Heart right ventricle (tissue), 16 donors: ENCODE measurements at regions of chr5 and their contacts with region 1.

Region 1: DNA sequence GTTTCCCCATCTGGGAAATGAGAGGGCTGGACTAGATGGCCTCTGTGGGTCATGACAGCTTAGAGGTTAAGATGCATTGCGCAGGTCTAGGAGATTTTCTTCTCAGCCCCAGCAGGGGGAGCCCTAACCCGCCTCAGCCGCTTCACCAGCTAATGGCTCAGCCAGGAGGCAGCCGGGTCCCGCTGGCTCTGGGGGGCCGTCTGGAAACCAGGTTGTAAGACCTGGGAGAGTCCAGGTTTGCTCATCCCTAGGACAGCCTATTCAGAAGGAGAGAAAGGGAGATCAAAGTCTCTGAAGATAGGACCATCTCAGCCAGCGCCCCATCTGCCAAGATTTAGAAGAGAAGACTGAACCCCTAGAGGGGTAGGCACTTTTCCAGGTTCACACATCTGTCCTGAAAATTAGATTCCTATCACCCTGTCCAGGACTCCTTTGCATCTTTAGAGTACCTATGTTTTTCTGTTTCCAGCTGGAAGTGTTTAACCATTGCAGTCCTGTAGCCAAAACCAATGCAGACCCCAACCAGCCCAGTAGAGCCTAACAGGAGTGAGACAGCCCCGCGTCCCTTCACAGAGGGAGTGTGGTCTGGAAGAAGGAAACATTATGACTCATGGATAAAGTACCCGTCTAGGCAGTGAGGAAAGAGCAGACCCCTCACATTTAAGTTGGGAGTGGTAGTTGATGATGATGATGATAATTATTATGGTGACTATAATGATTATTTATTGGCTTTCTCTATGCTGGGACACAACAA is 27.5 kb downstream of the SPARC start:
- DNase-seq: peak; percentile 88
- ATAC-seq: peak; percentile 76 to 91 (median 82)
- H3K4me3 ChIP-seq: no peak overlapping the region
- H3K27ac ChIP-seq: peak overlapping the region in 8 of 10 donors; percentile 3 to 84 (median 32)
- H3K4me1 ChIP-seq: peaks cover 8 to 41% (median 22%) of the 10 kb centered on the region in 9 donors
- H3K27me3 ChIP-seq: no peaks in the 10 kb centered on the region
- CTCF ChIP-seq: peak; percentile 88 to 97 (median 91)

Region 2: DNA sequence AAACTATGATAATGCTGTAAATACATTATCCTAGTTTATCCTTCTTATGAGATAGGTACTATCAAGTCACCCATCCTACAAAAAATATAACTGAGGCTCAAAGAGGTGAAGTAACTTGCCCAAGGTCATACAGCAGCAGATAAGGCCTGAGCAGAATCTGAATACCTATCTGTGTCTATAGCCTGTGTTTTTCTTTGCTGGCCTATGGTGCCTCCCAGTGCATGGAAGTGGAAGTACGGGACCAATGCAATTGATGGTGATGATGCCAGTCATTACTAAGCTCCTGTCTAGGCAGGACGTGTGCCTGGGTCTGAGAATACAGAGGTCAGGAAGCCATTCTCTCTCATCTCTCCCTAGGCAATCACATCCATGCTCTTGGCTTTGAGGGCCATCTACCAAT is 135.8 kb before region 1 on chr5:
- intact Hi-C with region 1: loop called in 5 of 10 experiments (anchors 5 to 10 kb)
- DNase-seq: no peak
- ATAC-seq: peak in 1 of 8 donors; percentile 11
- H3K4me3 ChIP-seq: no peak overlapping the region
- H3K27ac ChIP-seq: no peak overlapping the region
- H3K4me1 ChIP-seq: peaks cover 0 to 4% (median 0%) of the 10 kb centered on the region in 9 donors
- H3K27me3 ChIP-seq: no peaks in the 10 kb centered on the region
- CTCF ChIP-seq: peak in 7 of 9 donors; percentile 17 to 55 (median 28)

Region 3: GRCh38 chr5:151602806-151603205 is 56.4 kb before region 1 on chr5:
- intact Hi-C with region 1: no loop called
- DNase-seq: no peak
- ATAC-seq: no peak
- H3K4me3 ChIP-seq: no peak overlapping the region
- H3K27ac ChIP-seq: no peak overlapping the region
- H3K4me1 ChIP-seq: no peaks in the 10 kb centered on the region
- H3K27me3 ChIP-seq: peaks cover 0 to 16% (median 0%) of the 10 kb centered on the region in 7 donors
- CTCF ChIP-seq: no peak

Region 4: GRCh38 chr5:151699071-151699901 is 40.1 kb after region 1 on chr5:
- intact Hi-C with region 1: loop called in 1 of 10 experiments (anchors 5 kb)
- DNase-seq: peak; percentile 75 to 77
- ATAC-seq: peak; percentile 87 to 91 (median 89)
- H3K4me3 ChIP-seq: peak overlapping the region in 1 of 10 donors; percentile 23
- H3K27ac ChIP-seq: peak overlapping the region; percentile 29 to 89 (median 82)
- H3K4me1 ChIP-seq: peaks cover 0 to 56% (median 26%) of the 10 kb centered on the region in 9 donors
- H3K27me3 ChIP-seq: peaks cover 0 to 6% (median 0%) of the 10 kb centered on the region in 7 donors
- CTCF ChIP-seq: no peak

Region 5: GRCh38 chr5:151740336-151740942 is 81.3 kb after region 1 on chr5:
- intact Hi-C with region 1: loop called (anchors 1 to 5 kb)
- DNase-seq: peak; percentile 48 to 70
- ATAC-seq: peak; percentile 80 to 90 (median 84)
- H3K4me3 ChIP-seq: peak overlapping the region in 4 of 10 donors; percentile 12 to 29 (median 23)
- H3K27ac ChIP-seq: peak overlapping the region in 9 of 10 donors; percentile 38 to 84 (median 64)
- H3K4me1 ChIP-seq: peaks cover 0 to 53% (median 23%) of the 10 kb centered on the region in 9 donors
- H3K27me3 ChIP-seq: no peaks in the 10 kb centered on the region
- CTCF ChIP-seq: peak; percentile 83 to 94 (median 91)

Region 6: DNA sequence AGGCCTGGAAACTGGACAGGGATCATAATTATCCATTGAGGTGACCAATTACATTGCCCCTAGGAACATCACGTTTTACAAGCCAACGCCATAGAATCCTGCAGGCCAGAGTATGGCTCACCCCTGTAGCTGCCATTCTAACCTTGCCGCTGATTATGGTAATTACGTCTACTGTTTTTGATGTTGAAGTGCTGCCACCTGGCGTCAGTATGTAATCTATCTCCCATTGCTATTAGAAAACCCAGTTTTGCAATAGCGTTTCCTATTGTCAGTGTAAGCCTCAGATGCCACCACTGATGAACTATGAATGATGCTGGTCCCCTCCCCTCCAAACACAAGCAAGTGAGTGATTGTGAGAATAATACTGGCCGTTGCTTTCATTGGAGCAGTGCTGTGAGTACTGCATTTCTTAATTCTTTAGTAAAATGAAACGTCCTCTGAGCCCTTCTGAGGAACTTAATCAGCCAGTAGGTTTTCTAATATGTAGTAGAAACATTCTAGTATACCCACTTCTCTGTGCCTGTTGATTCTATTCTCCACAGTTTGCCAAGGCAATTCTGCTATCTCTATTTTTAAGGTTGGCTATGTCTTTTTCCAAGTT is 846.4 kb after region 1 on chr5:
- intact Hi-C with region 1: loop called in 3 of 10 experiments (anchors 10 kb)
- DNase-seq: peak in 1 of 2 donors; percentile 41
- ATAC-seq: peak; percentile 58 to 86 (median 71)
- H3K4me3 ChIP-seq: no peak overlapping the region
- H3K27ac ChIP-seq: no peak overlapping the region
- H3K4me1 ChIP-seq: no peaks in the 10 kb centered on the region
- H3K27me3 ChIP-seq: peaks cover 0 to 7% (median 0%) of the 10 kb centered on the region in 7 donors
- CTCF ChIP-seq: peak in 8 of 9 donors; percentile 44 to 72 (median 64)